ENCODE measurements at regions of chr3 and their contacts with region 1.

Region 1: DNA sequence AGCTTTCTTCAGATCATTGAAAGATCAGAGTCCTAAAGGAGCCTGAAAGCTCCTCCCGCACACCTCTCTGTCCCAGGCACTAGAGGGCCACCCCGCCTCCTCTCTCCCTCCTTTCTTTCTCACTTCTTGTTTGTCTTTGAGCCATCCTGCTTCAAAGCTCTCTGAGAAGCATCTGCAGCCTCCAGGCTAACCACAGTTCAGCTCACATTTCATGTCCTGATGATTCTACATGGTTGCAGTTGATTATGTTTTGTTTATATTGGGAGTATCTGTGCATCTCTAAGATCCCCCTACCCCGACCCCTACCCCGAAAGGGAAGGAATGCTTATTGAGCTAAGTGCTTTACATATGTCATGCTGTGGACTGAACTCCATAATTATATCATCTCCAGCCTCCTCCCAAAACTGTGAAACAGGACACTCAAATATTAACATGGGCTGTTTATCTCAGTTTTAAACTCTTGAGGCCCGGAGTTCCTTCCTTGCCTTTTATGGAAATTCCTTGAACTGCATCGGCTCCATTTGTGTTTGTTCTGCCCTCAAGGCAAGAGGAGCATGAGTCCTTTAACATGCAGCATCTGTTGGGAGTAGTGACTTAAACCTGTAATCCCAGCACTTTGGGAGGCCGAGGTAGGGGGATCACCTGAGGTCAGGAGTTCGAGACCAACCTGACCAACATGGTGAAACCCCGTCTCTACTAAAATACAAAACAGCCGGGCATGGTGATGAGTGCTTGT is 30.9 kb downstream of the MGLL start:
- DNase-seq: peak; percentile 65 to 84
- H3K4me3 ChIP-seq: no peak overlapping the region
- H3K27ac ChIP-seq: peak overlapping the region; percentile 54
- H3K4me1 ChIP-seq: peaks cover 30% of the 10 kb centered on the region
- H3K27me3 ChIP-seq: no peaks in the 10 kb centered on the region
- CTCF ChIP-seq: peak; percentile 46; the same call in 1 of the 2 replicates

Region 2: DNA sequence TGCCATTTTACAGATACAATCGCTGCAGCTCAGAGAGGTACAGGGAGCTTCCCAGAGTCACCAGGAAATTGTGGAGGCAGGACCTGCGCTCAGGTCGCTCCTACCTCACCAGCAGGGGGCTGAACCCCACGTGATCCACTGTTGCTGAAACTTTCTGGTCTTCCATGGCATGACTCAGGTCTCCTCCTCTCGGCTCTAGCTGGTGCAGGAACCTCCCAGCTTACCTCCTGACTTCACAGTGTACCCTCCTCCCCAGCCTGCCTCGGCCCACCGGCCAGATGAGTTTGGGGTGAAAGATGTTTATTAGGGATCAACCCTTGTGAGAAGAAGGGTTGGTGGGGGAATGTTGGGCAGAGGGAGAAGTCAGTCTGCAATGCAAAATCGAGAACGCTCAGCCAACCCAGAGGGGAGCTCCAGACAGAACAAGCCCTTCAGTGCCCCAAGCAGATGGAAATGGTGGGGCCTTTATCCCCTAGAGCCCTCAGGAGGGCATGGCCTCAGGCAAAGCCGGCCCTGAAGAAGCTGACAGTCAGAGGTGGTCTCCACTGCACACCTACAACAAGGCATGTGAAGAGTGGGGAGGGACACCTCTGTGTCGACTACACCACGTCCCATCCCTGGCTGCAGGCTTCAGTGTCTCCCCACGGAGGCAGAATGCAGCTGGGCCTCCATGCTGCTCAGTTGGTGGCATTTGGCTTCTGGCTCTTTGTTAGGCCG is 384.9 kb before region 1 on chr3:
- CTCF ChIA-PET with region 1: no interaction called
- POLR2A ChIA-PET with region 1: no interaction called
- intact Hi-C with region 1: no loop called
- DNase-seq: peak; percentile 30 to 39
- H3K4me3 ChIP-seq: no peak overlapping the region
- H3K27ac ChIP-seq: no peak overlapping the region
- H3K4me1 ChIP-seq: no peaks in the 10 kb centered on the region
- H3K27me3 ChIP-seq: peaks cover 59% of the 10 kb centered on the region
- CTCF ChIP-seq: peak; percentile 39; the same call in 1 of the 2 replicates

Region 3: DNA sequence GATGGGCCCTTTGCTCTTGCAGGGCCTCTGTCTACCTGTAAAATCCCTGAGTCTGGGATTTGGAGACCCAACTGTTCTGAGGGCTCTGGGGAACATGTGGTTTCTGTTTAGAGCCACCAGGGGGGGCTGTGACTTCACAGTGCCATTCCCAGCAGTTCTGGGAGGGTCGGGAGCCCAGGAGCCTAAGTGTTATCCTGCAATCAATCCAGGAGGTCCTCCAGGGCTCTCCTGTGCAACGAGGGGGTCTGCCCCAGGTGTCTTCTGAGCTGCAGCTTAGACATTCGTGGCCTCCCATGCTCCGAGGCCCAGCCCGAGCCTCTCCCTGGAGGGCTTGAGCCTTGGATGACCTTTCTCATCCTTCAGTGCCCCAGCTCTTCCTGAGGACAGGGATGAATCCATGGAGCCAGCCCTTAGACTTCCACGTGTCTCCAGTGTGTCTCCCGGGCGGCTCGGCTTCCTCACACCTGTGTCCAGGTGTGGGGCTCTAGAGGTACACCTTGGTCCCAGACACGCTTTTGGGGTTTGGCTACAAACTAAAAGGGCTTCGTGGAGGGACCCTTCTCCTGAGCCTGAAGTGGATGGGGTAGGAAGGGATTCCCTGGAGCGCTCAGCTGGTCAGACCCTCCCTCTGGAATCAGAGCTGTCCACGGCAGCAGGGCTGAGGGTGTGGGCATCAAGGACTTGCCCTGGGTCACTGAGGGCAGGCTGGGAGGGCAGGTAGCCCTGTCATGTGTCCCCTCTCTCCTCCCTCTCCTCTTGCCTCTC is 139.0 kb before region 1 on chr3:
- CTCF ChIA-PET with region 1: interaction called, 9 read pairs
- POLR2A ChIA-PET with region 1: no interaction called
- intact Hi-C with region 1: loop called (anchors 1 kb)
- DNase-seq: peak in 1 of 2 experiments; percentile 57
- H3K4me3 ChIP-seq: no peak overlapping the region
- H3K27ac ChIP-seq: no peak overlapping the region
- H3K4me1 ChIP-seq: peaks cover 26% of the 10 kb centered on the region
- H3K27me3 ChIP-seq: no peaks in the 10 kb centered on the region
- CTCF ChIP-seq: peak; percentile 92

Region 4: GRCh38 chr3:127822698-127823425 is 31.5 kb after region 1 on chr3:
- CTCF ChIA-PET with region 1: interaction called, 19 read pairs
- POLR2A ChIA-PET with region 1: interaction called, 3 read pairs
- intact Hi-C with region 1: no loop called
- DNase-seq: peak in 1 of 2 experiments; percentile 49
- H3K4me3 ChIP-seq: peak overlapping the region; percentile 76
- H3K27ac ChIP-seq: peak overlapping the region; percentile 93
- H3K4me1 ChIP-seq: peaks cover 44% of the 10 kb centered on the region
- H3K27me3 ChIP-seq: no peaks in the 10 kb centered on the region
- CTCF ChIP-seq: no peak

Region 5: DNA sequence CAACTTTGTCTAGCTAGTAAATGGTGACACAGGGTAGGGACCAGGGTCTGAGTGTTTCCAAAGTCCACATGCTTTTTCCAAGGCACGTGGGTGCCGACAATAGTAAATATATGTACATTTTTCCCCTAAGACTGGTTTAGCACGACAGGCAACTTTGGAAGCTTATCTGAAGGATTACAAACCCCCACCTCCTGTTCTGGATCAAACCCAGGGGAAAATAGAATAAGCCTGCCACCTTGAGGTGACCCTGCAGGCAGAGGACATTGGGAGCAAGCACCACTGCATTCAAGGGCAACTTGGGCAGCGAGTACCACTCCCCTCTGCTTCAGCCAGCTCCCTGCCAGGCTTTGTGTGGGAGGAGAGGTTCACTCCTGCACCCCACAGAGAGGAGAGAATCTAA is 168.5 kb after region 1 on chr3:
- CTCF ChIA-PET with region 1: interaction called, 7 read pairs
- POLR2A ChIA-PET with region 1: interaction called, 8 read pairs
- intact Hi-C with region 1: loop called (anchors 1 kb)
- DNase-seq: peak; percentile 69 to 85
- H3K4me3 ChIP-seq: no peak overlapping the region
- H3K27ac ChIP-seq: no peak overlapping the region
- H3K4me1 ChIP-seq: peaks cover 34% of the 10 kb centered on the region
- H3K27me3 ChIP-seq: no peaks in the 10 kb centered on the region
- CTCF ChIP-seq: peak; percentile 63

Region 6: DNA sequence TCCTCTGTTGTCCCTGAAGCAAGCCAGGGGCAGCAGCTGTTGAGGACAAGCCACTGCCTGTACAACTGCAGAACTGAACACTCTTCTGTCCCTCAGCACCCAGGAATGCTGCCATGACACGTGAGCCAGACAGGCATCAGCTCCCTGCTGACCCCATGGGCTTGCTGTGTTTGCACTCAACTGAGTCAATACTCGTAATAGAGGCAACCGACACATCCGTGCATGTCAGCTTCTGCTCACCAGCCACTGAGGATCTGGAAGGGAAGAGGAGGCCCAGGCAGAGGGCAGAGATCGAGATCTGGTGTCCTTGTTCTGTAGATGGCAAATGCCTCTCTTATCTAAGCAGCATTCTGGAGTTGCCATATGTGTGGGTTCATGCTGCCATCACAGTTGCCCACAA is 206.6 kb after region 1 on chr3:
- CTCF ChIA-PET with region 1: no interaction called
- POLR2A ChIA-PET with region 1: no interaction called
- intact Hi-C with region 1: no loop called
- DNase-seq: no peak
- H3K4me3 ChIP-seq: no peak overlapping the region
- H3K27ac ChIP-seq: no peak overlapping the region
- H3K4me1 ChIP-seq: no peaks in the 10 kb centered on the region
- H3K27me3 ChIP-seq: peaks cover 4% of the 10 kb centered on the region; the same call in 1 of the 2 replicates
- CTCF ChIP-seq: no peak

Measured in PC-9 (cell line).